Tibial artery (tissue), 4 donors: ENCODE measurements at regions of chr20 and their contacts with region 1.

Region 1: DNA sequence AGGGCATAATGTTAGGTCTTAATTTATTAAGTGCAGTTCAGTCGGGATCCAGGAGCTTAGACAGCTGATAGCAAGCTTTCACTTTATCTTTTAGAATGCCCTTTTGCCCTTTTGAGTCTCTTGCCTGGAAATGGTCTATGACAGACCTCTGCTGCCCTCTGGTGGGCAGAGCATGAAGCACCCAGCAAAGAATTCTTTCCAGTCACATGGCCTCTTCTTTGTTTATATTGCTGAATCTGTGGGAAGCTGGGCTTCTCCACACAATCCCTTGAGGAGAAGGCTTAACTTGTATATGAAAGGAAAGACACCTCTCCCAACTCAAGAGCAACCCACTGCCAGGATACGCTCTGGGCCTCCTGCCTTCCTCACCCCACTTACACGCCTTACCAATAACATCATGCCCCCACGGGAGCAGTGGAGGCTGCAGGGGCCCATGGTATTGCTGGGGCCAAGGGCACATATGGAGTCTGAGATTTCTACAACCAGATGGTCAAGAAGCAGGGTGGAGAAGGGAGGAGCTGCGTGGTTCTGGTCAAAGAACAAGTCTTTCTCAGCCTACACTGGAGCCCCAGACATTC is 20.4 kb downstream of the WFDC3 start:
- DNase-seq: peak; percentile 82 to 86
- H3K4me3 ChIP-seq: no peak overlapping the region
- H3K27ac ChIP-seq: peak overlapping the region; percentile 69 to 79
- H3K4me1 ChIP-seq: peaks cover 0 to 12% (median 8%) of the 10 kb centered on the region in 4 donors
- H3K27me3 ChIP-seq: no peaks in the 10 kb centered on the region
- CTCF ChIP-seq: peak; percentile 93 to 94

Region 2: DNA sequence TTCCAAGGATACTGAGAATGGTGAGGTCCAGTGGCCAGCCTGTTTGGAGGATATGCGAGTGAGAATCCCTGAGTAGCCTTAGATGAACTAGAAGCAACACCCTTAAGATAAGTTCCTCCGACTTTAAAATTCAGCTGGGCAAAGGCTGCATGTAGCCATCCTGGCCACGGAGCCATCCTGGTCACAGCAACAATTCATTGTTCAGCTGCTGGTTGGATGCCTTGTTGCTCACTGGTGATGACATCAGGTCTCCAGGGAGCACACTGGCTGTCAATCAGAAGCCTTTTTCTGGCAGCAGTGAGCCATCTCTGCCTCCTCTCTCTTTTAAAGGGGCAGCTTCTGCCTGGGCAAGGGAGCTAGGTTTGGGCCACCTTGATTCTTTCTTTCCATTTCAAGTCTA is 938.5 kb before region 1 on chr20:
- intact Hi-C with region 1: no loop called
- DNase-seq: no peak
- H3K4me3 ChIP-seq: no peak overlapping the region
- H3K27ac ChIP-seq: no peak overlapping the region
- H3K4me1 ChIP-seq: no peaks in the 10 kb centered on the region
- H3K27me3 ChIP-seq: peaks cover 0 to 24% of the 10 kb centered on the region in 2 donors
- CTCF ChIP-seq: no peak

Region 3: DNA sequence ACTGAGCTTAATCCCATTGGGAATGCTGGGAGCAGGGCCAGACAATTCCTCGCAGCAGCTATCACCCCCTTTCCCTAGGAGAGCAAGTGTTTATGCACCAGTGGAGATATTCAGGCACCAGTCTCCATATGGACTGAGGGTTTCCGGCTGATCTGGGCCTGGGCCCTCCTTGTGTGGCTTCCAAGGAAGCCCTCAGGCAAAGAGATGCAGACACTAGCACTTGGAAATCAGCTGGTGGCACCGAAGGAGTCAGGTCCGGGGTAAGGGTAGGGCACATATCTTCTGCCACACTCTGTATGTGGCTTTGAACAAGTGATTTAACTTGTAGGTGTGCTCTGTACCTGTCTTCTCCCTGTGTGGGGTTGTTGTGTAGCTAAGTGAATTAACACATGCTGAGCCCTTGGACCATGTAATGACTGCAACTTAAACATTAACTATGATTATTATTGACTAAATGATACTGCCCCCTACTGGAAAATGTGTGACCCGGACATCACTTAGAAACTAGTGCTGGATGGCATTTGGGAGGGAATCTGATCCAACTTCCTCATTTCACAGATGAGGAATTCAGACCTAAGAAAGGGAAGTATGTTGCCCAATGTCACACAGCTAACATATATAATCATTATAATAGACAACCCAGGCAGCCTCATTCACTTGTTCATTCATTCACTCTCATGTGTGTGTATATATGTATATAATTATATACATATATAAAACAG is 321.0 kb before region 1 on chr20:
- intact Hi-C with region 1: loop called (anchors 10 kb)
- DNase-seq: no peak
- H3K4me3 ChIP-seq: no peak overlapping the region
- H3K27ac ChIP-seq: peak overlapping the region; percentile 60 to 68
- H3K4me1 ChIP-seq: peaks cover 0 to 26% (median 10%) of the 10 kb centered on the region in 4 donors
- H3K27me3 ChIP-seq: no peaks in the 10 kb centered on the region
- CTCF ChIP-seq: peak; percentile 37 to 46

Region 4: DNA sequence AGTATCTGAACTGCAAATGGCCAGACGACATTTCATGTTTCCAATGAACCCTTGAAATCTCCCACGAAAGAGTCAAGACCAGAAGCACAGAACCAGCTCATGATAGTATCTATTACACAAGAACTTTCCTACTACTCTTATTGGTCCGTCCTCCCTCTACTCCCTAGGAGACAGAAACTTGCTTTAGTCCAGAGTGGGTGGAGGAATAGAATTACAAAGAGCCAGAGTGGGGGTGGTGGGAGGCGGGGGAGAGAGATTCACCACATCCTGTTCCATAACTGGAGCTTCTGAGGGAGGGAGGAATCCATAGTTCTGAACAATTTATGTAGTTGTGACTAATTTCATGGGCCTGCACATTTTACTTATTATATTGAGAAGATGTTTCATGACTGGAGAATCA is 160.2 kb before region 1 on chr20:
- intact Hi-C with region 1: no loop called
- DNase-seq: no peak
- H3K4me3 ChIP-seq: no peak overlapping the region
- H3K27ac ChIP-seq: no peak overlapping the region
- H3K4me1 ChIP-seq: no peaks in the 10 kb centered on the region
- H3K27me3 ChIP-seq: peaks cover 0 to 2% of the 10 kb centered on the region in 2 donors
- CTCF ChIP-seq: no peak

Region 5: GRCh38 chr20:45801851-45802250 is 30.6 kb after region 1 on chr20:
- intact Hi-C with region 1: no loop called
- DNase-seq: no peak
- H3K4me3 ChIP-seq: no peak overlapping the region
- H3K27ac ChIP-seq: no peak overlapping the region
- H3K4me1 ChIP-seq: no peaks in the 10 kb centered on the region
- H3K27me3 ChIP-seq: no peaks in the 10 kb centered on the region
- CTCF ChIP-seq: no peak